Tibial artery (tissue), 4 donors: ENCODE measurements at regions of chr14 and their contacts with region 1.

Region 1: DNA sequence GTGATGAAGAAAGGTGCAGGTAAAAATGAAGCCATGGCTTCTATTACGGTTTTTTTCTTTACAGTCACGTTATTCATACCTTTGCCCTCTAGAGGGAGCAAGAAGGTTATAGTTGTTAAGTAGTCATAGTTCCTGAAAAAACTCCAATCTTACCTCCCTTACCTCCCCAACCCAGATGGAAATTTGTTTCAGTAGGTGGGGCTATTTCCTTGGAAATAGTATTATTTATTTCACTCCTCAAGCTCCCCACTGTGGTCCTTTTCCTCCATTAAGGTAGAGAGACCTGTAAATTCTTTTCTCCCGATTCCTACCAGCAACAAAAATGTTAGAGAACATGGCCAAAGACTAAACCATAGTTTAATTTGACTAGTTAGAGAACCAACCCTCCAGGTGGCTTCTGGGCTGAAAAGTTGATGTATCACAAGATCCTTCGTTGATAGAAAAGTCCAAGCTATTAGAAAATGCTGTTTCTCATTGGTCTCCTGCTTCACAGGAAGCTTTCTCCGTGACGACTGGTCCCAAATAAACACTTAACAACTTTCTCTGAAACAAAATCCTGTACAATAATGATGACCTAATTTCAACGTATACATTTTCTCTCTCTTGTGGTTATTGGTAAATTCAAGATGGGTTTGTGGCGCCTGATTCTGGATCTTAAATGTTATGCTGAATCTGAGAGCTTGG is 43.5 kb downstream of the TMX1 start:
- DNase-seq: no peak
- H3K4me3 ChIP-seq: no peak overlapping the region
- H3K27ac ChIP-seq: no peak overlapping the region
- H3K4me1 ChIP-seq: no peaks in the 10 kb centered on the region
- H3K27me3 ChIP-seq: no peaks in the 10 kb centered on the region
- CTCF ChIP-seq: peak; percentile 71 to 87

Region 2: GRCh38 chr14:51479584-51480325 is 196.2 kb after region 1 on chr14:
- intact Hi-C with region 1: no loop called
- DNase-seq: peak in 1 of 2 donors; percentile 55
- H3K4me3 ChIP-seq: no peak overlapping the region
- H3K27ac ChIP-seq: no peak overlapping the region
- H3K4me1 ChIP-seq: no peaks in the 10 kb centered on the region
- H3K27me3 ChIP-seq: no peaks in the 10 kb centered on the region
- CTCF ChIP-seq: no peak

Region 3: GRCh38 chr14:51527073-51527472 is 243.5 kb after region 1 on chr14:
- intact Hi-C with region 1: no loop called
- DNase-seq: no peak
- H3K4me3 ChIP-seq: no peak overlapping the region
- H3K27ac ChIP-seq: no peak overlapping the region
- H3K4me1 ChIP-seq: no peaks in the 10 kb centered on the region
- H3K27me3 ChIP-seq: no peaks in the 10 kb centered on the region
- CTCF ChIP-seq: no peak

Region 4: GRCh38 chr14:51651388-51652167 is 368.0 kb after region 1 on chr14 and contains the start of gene FRMD6:
- intact Hi-C with region 1: loop called (anchors 10 kb)
- DNase-seq: peak; percentile 83 to 93
- H3K4me3 ChIP-seq: peak within 1 kb of the TSS; percentile 65 to 96
- H3K27ac ChIP-seq: peak within 1 kb of the TSS; percentile 95 to 97
- H3K4me1 ChIP-seq: peaks cover 6 to 45% (median 17%) of the 10 kb centered on the region in 4 donors
- H3K27me3 ChIP-seq: no peaks in the 10 kb centered on the region
- CTCF ChIP-seq: peak; percentile 78 to 79

Region 5: GRCh38 chr14:51780006-51780692 is 496.6 kb after region 1 on chr14:
- intact Hi-C with region 1: loop called (anchors 2 kb)
- DNase-seq: peak; percentile 73 to 81
- H3K4me3 ChIP-seq: no peak overlapping the region
- H3K27ac ChIP-seq: no peak overlapping the region
- H3K4me1 ChIP-seq: peaks cover 0 to 10% (median 1%) of the 10 kb centered on the region in 4 donors
- H3K27me3 ChIP-seq: no peaks in the 10 kb centered on the region
- CTCF ChIP-seq: peak; percentile 79 to 86